Posterior cingulate gyrus (tissue), 11 donors: ENCODE measurements at regions of chr5 and their contacts with region 1.

Region 1: GRCh38 chr5:87394411-87395165 is 18.1 kb downstream of the CCNH start:
- DNase-seq: no peak

Region 2: DNA sequence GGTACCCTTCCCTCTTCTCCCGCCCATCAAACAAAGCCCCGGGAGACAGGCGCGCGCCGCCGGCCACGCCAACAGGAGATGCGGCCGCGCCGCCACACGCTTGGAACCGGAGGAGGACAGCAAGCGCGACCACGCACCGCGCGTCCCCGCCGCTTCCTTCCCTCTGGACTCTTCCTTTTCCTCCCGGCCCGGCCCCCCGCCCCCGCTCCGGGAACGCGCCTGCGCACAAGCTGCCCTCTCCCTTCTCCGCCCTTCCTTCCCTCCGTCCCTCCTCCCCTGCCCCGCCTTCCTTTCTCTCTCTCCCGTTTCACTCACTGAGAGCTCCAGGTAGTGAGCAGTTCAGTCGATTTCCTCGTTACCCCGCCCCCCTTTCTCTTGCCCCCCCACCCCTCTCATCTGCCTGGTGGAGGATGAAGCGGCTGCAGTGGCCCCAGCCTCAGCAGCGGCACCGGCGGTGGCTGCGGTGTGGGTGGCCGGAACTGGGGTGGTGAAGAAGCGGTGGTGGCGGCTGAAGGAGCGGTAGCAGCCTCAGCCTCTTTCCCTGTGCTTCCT is 126.9 kb before region 1 on chr5 and contains the start of gene RASA1:
- intact Hi-C with region 1: loop called (anchors 5 kb)
- DNase-seq: peak; percentile 93 to 99 (median 95)